Psoas muscle (tissue), 8 donors: ENCODE measurements at regions of chrX and their contacts with region 1.

Region 1: GRCh38 chrX:153667956-153668396 is 5.6 kb downstream of the PNCK start:
- DNase-seq: peak; percentile 80 to 91
- ATAC-seq: peak; percentile 82 to 94 (median 84)
- H3K4me3 ChIP-seq: no peak overlapping the region
- H3K27ac ChIP-seq: no peak overlapping the region
- H3K4me1 ChIP-seq: no peaks in the 10 kb centered on the region
- H3K27me3 ChIP-seq: peaks cover 0 to 18% (median 0%) of the 10 kb centered on the region in 3 donors
- CTCF ChIP-seq: peak; percentile 69

Region 2: DNA sequence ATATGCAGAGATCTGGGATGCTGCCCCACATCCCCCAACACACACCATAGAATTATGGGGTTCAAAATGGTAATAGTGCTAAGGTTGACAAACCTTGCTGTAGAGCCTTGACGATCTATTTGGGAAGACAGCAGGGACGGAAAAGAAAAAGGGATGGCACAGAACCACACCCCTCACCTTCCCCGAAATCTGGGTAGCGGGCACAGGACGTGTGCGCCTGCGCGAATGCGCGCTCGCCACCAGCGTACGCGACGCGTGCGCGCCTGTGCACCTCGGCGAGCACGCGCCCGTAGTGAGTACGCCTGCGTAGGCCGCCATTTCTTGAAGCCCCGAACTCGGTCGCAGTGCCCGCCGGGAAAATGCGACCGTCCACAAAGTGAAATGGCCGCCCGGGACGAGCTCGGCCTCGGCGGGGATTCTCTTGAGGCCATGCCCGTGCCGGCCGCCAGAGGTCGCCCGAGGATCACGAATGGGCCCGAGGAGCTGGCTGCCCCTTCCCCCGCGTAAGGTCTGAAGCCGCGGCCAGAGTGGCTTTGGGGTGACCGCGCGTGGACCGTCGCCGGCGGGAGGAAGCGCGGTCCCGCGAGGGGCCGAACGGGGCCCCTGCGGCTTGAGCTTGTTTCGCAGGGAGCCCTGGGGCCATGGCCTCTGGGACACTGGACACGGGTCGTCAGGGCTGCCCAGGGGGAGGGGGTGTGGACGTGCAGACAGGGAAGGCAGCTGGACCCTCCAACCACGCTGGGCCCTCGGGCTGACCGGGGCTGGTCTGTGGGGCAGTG is 726.5 kb before region 1 on chrX:
- intact Hi-C with region 1: loop called in 1 of 2 experiments (anchors 10 kb)
- DNase-seq: peak; percentile 90 to 95
- ATAC-seq: peak; percentile 96 to 98 (median 98)
- H3K4me3 ChIP-seq: peak overlapping the region; percentile 74
- H3K27ac ChIP-seq: peak overlapping the region; percentile 83
- H3K4me1 ChIP-seq: no peaks in the 10 kb centered on the region
- H3K27me3 ChIP-seq: peaks cover 0 to 5% (median 0%) of the 10 kb centered on the region in 3 donors
- CTCF ChIP-seq: peak; percentile 76

Region 3: DNA sequence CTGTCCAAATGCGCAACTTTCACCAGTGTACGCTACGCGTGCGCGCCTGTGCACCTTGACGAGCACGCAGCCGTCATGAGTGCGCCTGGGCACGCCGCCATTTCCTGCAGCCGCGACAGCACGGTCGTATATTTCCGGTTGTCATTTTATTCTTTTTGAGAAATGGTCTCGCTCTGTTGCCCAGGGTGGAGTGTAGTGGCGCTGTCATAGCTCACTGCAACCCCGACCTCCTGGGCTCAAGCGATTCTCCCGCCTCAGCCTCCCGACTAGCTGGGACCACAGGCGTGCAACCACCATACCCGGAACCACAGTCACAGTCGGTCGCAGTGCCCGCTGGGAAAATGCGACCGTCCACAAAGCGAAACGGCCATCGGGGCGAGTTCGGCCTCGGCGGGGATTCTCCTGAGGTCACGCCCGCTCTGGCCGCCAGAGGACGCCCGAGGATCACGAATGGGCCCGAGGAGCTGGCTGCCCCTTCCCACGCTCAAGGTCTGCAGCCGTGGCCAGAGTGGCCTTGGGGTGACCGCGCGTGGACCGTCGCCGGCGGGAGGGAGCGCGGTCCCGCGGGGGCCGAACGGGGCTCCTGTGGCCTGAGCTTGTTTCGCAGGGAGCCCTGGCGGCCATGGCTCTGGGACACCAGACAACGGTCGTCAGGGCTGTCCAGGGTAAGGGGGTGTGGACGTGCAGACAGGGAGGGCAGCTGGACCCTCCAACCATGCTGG is 635.4 kb before region 1 on chrX:
- intact Hi-C with region 1: loop called in 1 of 2 experiments (anchors 10 kb)
- DNase-seq: peak; percentile 75 to 83
- ATAC-seq: peak; percentile 82 to 96 (median 88)
- H3K4me3 ChIP-seq: peak overlapping the region; percentile 31
- H3K27ac ChIP-seq: no peak overlapping the region
- H3K4me1 ChIP-seq: no peaks in the 10 kb centered on the region
- H3K27me3 ChIP-seq: no peaks in the 10 kb centered on the region
- CTCF ChIP-seq: peak; percentile 78

Region 4: DNA sequence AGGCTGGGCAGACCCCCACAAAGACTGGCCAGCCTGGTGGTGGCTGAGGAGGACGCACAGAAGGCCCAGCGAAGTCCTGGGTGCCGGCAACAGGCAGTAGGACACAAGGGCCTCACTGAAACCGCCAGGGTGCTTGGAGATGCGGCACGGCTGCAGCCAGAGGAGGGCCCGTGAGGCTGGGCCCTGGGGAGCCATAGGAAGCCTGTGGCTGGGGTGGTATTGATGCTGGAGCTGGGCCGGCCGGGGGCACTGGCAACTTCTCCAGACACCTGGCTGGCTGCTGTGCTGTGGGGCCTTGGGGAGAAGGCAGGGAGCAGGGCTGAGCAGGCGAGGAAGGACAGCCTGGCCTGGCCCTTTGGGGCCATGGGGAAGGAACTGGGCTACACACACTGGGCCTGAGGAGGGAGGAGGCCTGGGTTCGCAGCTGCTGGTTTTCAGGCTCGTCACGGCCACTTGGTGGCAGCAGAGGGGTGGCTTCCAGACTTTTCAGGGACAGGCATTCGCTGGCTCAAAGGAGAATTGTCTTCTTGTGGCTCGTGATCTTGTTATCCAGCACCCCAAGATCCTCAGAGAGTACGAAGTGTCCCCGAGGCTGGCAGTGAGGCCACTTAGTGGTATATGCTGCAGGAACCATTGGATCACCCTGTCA is 113.3 kb before region 1 on chrX:
- intact Hi-C with region 1: loop called (anchors 5 kb)
- DNase-seq: peak; percentile 67 to 82
- ATAC-seq: peak; percentile 69 to 89 (median 78)
- H3K4me3 ChIP-seq: no peak overlapping the region
- H3K27ac ChIP-seq: no peak overlapping the region
- H3K4me1 ChIP-seq: no peaks in the 10 kb centered on the region
- H3K27me3 ChIP-seq: peaks cover 0 to 4% (median under 1%) of the 10 kb centered on the region in 3 donors
- CTCF ChIP-seq: peak; percentile 58

Region 5: GRCh38 chrX:153609917-153610428 is 58.0 kb before region 1 on chrX:
- intact Hi-C with region 1: loop called in 1 of 2 experiments (anchors 5 kb)
- DNase-seq: peak; percentile 78 to 87
- ATAC-seq: peak; percentile 80 to 97 (median 92)
- H3K4me3 ChIP-seq: peak overlapping the region; percentile 46
- H3K27ac ChIP-seq: no peak overlapping the region
- H3K4me1 ChIP-seq: no peaks in the 10 kb centered on the region
- H3K27me3 ChIP-seq: peaks cover 0 to 27% (median 4%) of the 10 kb centered on the region in 3 donors
- CTCF ChIP-seq: peak; percentile 70